ENCODE measurements at regions of chr4 and their contacts with region 1.

Region 1: DNA sequence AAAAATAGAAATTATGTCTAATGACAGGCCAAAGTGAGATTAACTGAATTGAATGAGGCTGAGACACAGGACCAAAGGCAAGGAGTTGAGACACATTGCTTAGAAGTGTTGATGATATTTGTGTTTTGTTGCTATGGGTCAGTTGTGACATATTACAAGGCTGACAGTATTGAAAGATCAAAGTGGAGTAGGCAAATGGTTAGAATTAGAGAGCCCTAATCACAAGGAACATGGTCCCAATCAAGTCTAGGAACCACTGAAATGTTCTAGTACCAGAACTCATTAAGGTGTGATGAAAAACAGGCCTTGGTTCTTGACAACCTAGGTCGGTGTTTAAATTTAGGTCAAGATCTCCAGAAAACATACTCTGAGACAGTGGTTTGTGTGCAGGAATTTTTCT is 896.3 kb upstream of the HS3ST1 start:
- DNase-seq: no peak
- H3K4me3 ChIP-seq: no peak overlapping the region
- H3K27ac ChIP-seq: no peak overlapping the region
- H3K4me1 ChIP-seq: no peaks in the 10 kb centered on the region
- H3K27me3 ChIP-seq: no peaks in the 10 kb centered on the region
- CTCF ChIP-seq: no peak
- POLR2A ChIP-seq: no peak

Region 2: DNA sequence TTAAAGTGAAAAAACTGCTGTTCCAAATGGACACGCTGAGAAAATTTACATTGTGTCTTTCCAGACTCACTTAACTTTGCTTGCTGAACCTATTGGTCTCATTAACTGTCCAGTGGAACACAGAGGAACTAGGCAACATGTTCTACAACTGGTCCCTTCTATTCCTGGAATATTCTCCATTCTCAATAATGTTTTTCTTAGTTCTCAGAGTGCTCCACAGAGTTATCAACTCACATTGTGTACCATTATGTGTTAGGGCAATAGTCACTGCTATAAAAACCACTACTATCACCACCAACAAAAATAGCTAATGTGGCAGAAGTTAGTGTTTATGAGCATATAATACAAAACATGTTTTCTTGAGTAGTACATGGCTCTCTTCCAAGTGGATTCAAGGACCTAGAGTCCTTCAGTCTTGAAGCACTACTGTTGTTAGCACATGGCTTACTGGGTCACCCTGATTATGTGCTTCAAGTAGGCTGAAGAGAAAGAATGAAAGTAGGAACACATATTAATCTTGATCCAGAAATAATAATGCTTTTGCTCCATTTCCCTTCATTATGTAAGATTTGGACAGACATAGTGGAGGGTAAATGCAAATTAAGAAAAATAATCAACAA is 30.9 kb before region 1 on chr4:
- intact Hi-C with region 1: loop called (anchors 2 kb)
- DNase-seq: no peak
- H3K4me3 ChIP-seq: no peak overlapping the region
- H3K27ac ChIP-seq: no peak overlapping the region
- H3K4me1 ChIP-seq: no peaks in the 10 kb centered on the region
- H3K27me3 ChIP-seq: no peaks in the 10 kb centered on the region
- CTCF ChIP-seq: no peak
- POLR2A ChIP-seq: no peak

Measured in breast epithelium (tissue), 4 donors.